ENCODE measurements at regions of chr3 and their contacts with region 1.

Region 1: DNA sequence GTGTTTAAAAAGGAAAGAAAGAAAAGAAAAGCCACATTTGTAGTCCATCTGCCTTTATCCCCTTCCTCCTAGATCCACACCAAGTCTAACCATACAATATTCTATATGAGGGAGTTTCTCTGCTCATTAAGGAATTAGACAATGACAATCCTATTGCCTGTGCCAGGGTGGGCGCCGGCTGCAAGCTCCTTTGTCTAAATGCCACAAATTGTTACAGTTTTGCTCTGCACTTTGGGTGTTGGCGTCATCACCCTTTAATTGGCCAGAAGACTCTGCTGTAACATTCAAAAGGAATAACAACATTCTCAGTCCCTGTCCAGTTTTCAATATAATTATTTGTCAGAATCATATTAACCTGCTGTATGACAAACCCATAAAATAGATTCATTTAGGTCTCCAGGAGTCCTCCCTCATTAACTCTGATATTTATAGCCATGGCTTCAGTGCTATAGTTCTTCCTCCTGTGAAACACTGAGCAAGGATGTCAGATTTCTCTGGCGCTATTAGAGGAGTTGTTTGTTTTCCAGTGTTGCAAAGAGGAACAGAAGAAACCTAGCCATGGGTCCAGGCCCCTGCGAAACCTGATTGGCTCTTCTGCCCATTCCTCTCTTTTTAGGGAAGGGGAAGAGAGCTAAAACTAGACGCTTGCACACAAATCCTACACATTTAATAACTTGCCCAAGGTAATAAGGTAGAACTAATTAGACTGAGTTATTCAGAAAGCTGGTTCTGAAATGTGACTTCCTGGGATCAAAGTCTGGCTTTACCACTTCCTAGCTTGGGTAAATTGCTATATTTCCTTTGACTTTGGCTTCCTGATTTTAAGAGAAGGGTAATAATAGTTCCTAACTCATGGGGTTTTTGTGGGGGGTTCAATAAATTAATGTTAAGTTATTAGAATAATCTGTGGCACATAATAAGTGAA is 112.4 kb downstream of the CD47 start:
- DNase-seq: no peak

Region 2: DNA sequence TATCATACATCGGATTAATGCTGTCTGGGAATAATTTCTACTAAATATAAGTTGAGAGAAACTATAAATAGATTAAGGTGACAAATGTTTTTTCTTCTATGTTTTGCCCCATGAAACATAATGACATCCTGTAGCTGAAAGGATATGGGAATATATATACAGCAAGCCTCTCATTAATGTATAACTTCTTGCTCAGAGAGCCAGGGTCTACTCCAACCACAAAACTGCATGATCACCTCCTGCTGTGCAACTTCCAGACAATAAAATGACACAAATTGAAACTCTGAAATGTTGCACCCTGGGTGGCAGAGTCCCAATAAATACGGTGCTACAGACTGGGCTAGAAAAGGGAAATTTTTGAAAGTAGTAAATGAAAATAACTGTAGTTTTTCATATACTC is 1537.7 kb before region 1 on chr3:
- intact Hi-C with region 1: no loop called
- DNase-seq: no peak

Region 3: DNA sequence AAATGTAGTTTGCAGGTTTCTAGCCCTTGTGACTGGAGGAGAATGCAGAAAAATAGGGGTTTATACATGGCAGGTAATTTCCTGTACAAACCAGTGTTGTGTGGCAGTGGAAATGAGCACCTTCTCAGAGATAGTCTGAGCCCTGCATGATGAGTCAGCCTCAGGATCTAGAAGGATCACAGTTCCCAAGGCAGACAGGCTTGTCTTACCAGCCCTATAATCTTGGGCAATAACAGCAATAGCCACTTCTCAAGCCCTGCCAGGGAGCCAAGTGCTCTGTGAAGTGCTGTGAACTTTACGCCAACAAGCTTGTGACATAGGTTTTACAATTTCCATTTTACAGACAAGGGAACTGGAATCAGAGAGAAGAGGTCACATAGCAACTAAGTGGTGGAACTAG is 23.1 kb after region 1 on chr3:
- intact Hi-C with region 1: loop called in 1 of 2 experiments (anchors 1 kb)
- DNase-seq: no peak

Measured in posterior vena cava (tissue), 2 donors.